Head of caudate nucleus (tissue), 42 donors: ENCODE measurements at regions of chr12 and their contacts with region 1.

Region 1: DNA sequence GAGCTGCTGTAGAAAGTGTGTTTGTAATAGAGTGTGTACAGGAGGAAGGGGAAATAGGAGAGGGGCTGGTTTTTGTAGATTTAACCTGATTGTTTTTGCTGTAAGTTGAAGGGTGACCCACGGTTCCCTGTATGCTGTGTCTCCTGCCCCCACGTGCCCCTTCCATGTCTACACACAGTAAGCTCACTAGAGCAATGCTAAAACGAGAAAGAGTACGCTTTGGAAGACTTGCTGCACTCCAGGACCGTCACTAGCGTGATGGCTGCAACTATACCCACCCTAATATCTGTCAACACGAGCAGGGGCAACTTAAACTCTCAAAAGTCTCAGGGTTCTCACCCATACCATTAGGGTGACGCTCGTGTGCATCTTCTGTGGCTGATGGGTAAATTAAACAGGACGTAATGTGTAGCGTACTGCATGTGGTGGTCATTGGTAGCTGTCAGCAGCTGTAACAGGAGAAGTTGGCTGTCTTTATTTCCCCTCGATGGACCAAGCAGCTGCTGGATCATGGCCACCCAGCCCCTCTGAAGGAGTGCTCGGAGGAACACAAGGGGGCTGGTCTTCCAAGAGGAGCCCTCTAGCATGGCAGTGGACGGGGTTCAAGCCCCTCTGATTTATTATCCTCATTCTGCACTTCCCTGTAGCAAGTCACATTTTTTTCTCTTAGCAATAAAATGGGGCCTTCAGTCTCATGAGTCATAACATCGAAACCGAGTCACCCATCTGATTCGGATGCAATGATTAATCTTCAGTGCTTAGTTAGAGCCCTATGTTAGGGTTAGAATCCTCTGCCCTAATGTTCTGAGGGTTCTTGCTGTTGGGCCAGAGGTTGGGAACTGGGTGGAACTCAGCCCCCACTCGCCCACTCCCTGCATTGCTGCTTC is 14.0 kb downstream of the CCND2 start:
- DNase-seq: peak in 1 of 42 donors; percentile 42

Region 2: DNA sequence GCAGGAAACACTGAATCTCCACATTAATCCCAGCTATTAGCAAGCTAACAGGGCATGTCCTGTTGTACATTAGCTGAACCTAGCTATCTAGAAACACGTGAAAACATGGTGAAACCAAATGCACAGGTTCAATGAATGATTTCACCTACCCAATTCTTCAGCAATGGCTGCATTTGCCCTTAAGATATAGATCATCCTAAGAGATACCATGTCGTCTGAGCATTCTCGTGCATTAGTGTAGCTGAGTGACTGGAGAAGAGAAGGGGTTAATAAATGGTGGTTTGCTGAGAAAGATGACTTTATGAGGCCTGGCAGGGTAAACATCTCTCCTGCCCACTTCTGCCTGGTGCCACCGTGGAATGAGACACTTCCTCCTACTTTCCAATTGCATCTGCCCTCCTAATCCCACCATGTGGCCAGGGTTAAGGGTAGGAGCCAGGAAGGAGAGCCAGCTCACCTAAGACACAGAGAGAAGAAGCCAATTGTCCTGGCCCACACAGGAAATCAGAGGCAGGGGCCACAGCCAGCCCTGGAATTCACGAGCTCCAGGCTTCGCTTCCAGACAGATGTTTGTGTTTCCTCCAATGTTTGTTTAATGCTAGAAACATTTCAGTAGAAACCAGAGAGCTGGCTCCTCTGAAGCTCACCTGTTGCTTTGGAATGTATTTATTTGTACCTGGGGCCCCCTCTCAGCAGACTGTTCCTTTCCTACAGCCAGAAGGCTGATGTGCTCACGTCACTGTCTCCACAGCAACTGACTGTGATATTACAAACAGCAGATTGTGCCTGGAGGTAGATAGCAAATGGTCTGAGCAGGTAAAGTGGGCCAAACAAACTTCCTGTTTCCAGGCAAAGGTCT is 288.4 kb before region 1 on chr12:
- intact Hi-C with region 1: loop called (anchors 10 kb)
- DNase-seq: no peak

Region 3: DNA sequence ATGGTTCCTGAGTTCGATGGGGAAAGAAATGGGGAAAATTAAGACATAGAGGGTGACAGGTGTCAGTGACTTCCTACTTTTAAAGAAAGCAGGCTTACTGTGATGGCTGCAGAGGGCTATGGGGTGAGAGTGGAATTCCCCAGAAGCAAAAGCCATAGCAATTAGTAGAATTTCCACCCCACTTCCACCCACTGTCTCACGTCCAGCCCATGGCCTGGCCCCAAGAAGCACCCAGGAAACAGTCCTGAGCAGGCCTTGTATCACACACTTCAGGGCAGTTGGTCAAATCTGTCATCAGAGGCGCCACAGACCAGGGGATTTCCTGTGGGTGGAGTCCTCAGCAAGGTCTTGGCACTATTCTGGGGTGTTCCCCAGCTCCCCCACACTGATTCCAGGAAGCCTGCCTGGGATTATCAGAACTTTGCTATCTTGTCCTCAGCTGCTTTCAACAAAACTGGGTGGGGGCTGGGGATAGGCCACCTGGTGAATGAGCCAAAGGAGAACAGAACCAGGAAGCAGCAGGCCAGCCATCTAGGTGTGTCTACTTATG is 134.2 kb before region 1 on chr12:
- intact Hi-C with region 1: no loop called
- DNase-seq: no peak